Cardiac septum (tissue), 1 donor: ENCODE measurements at regions of chr2 and their contacts with region 1.

Region 1: DNA sequence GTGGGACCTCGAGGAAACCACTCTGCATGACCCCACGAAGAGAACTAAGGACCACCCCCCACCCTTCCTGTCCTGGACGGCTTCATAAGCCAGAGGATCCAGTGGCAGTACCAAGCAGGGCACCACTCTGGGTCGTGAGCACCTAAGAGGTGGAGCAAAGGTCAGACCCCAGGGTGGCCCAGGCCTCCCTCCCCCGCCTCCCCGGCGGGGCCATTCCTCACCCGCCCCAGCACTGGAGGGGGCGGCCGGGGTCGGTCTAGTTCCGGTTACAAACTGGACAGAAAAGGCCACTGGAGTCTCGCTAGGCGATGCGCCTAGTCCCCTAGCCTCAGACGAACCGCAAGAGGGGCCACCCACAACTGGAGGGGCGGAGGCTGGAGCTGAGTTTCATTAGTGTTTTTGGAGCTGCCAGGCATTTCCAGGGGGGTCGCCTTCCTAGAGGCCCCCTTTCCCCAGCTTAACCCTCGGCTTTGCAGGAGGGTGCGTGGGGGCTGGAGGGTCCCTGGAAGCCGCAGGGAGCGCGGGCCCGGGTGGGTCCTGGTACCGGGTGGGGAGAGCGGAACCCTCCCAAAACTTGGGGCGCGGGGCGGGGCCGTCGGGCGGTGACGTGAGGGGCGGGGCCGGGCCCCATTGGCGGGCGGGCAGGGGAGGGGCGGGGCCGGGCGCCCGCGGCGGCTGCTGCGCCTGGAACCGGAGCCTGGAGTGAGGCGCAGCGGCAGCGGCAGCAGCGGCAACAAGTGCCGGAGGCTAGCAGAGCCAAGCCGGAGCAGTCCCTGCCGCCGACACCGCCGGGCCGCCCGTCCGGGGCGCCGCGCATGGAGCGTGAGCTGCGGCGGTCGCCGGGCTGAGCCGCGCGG is at the start of gene B3GNT2:
- DNase-seq: peak; percentile 95
- total RNA-seq, gene B3GNT2: 31.2 TPM

Region 2: GRCh38 chr2:61928826-61929461 is 266.7 kb before region 1 on chr2:
- intact Hi-C with region 1: loop called (anchors 5 kb)
- DNase-seq: no peak

Region 3: DNA sequence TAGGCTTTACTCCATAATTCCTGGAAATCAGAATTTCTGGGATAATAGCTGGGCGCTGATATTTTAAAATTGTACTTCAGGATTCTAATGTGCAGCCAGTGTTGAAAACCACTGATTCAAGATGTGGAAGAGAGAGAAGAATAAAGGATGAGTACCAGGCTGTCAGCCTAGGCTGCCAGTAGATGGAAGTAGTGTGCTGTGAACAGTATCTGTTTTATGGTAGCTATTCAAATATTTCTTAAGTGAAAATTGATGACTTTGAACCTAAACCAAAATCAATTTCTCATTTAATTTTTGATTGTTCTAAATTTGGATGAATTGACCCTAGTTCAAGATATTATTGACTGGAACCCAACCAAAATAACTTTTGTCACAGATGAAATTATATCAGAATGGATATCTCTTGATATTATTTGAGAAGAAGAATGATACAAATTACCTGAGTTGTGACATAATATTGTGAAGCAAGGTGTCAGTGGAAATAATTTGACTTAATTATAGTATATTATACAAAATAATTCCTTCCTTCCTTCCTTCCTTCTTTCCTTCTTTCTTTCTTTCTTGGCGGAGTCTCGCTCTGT is 202.1 kb before region 1 on chr2:
- intact Hi-C with region 1: loop called (anchors 5 kb)
- DNase-seq: no peak

Region 4: GRCh38 chr2:62014102-62014501 is 181.5 kb before region 1 on chr2:
- intact Hi-C with region 1: loop called (anchors 5 kb)
- DNase-seq: peak; percentile 78

Region 5: GRCh38 chr2:62234755-62235655 is 39.4 kb after region 1 on chr2:
- intact Hi-C with region 1: no loop called
- DNase-seq: no peak

Region 6: GRCh38 chr2:62293490-62294271 is 98.0 kb after region 1 on chr2:
- intact Hi-C with region 1: loop called (anchors 2 kb)
- DNase-seq: no peak

Region 7: GRCh38 chr2:62340994-62341484 is 145.4 kb after region 1 on chr2:
- intact Hi-C with region 1: loop called (anchors 5 kb)
- DNase-seq: peak; percentile 78

Region 8: GRCh38 chr2:62410015-62410453 is 214.4 kb after region 1 on chr2:
- intact Hi-C with region 1: loop called (anchors 2 kb)
- DNase-seq: no peak

Region 9: DNA sequence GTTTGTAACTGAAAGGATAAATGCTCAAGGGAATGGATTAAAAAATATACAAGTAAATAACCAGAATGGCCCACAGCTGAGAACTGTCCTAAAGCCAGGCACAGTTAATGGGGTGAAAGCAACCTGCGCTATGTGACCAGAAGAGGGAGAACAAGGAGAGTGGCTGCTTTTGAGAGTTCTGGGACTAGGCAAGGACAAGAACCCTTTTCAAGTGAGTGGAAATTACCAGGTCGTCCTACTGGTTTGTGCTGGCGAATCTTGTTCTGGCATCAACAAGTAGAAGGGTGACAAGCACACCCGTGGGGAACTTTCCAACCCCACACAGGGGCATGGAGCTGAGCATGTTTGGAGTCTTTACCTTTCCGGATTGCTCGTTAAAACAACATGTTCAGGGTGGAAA is 227.6 kb after region 1 on chr2:
- intact Hi-C with region 1: no loop called
- DNase-seq: no peak